GM10248 (cell line): ENCODE measurements at regions of chr6 and their contacts with region 1.

Region 1: GRCh38 chr6:11496152-11497060 is 41.1 kb upstream of the TMEM170B start:
- DNase-seq: peak; percentile 72
- CTCF ChIP-seq: peak; percentile 75

Region 2: GRCh38 chr6:11155589-11155988 is 340.8 kb before region 1 on chr6:
- CTCF ChIA-PET with region 1: interaction called, 13 read pairs
- POLR2A ChIA-PET with region 1: no interaction called
- DNase-seq: no peak
- CTCF ChIP-seq: no peak

Region 3: DNA sequence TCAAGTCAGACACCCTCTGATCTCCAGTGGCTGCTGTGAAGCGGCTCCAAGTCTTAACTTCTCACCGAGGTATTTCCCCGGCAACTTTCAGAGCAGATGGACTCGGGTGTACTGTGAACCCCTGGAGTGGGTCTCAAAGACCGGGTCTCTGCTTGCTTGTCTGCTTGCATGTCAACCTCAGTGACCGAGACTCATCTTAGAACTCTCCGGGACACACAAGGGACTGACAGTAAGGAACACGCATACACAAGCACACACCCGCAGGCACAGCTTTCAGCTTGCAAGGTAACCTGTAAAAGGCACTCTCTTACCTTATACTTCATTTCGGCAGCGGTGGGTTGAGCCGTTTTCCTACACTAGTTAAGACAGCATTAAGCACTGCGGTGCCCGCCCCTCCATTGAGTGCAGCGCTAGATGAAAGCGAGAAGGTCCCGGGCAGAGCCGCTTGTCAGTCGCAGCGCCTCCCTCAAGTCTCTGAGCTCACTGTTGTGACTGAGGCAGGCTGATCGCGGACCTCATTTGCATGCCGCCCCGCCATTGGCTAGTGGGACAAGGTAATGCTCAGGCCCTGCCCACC is 264.1 kb before region 1 on chr6 and contains the start of gene NEDD9:
- CTCF ChIA-PET with region 1: interaction called, 32 read pairs
- POLR2A ChIA-PET with region 1: interaction called, 4 read pairs
- DNase-seq: peak; percentile 91
- CTCF ChIP-seq: no peak

Region 4: GRCh38 chr6:11330413-11330760 is 166.0 kb before region 1 on chr6:
- CTCF ChIA-PET with region 1: interaction called, 30 read pairs
- POLR2A ChIA-PET with region 1: no interaction called
- DNase-seq: no peak
- CTCF ChIP-seq: no peak

Region 5: GRCh38 chr6:11381801-11382513 is 114.4 kb before region 1 on chr6:
- CTCF ChIA-PET with region 1: interaction called, 48 read pairs
- POLR2A ChIA-PET with region 1: no interaction called
- DNase-seq: peak; percentile 65
- CTCF ChIP-seq: no peak

Region 6: DNA sequence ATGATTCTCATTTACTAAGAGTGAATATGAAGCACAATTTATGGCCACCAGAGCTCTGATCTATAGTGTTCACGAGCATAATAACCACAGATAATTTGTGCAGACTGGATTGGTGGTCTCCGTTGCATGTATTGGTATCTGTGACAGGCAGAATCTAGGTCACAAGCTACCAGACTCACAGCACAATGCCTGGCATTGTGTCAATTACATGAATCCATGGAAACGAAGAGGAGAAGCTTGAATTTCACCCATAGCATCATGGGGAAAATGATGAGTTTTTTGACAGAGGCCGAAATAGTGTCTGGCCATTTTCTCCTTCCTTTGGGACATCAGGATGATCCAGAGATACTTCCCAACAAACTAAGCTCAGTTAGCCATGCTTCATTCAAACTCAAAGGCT is 11.1 kb before region 1 on chr6:
- CTCF ChIA-PET with region 1: interaction called, 54 read pairs
- POLR2A ChIA-PET with region 1: no interaction called
- DNase-seq: no peak
- CTCF ChIP-seq: no peak